PC-3 (cell line): ENCODE measurements at regions of chr12 and their contacts with region 1.

Region 1: DNA sequence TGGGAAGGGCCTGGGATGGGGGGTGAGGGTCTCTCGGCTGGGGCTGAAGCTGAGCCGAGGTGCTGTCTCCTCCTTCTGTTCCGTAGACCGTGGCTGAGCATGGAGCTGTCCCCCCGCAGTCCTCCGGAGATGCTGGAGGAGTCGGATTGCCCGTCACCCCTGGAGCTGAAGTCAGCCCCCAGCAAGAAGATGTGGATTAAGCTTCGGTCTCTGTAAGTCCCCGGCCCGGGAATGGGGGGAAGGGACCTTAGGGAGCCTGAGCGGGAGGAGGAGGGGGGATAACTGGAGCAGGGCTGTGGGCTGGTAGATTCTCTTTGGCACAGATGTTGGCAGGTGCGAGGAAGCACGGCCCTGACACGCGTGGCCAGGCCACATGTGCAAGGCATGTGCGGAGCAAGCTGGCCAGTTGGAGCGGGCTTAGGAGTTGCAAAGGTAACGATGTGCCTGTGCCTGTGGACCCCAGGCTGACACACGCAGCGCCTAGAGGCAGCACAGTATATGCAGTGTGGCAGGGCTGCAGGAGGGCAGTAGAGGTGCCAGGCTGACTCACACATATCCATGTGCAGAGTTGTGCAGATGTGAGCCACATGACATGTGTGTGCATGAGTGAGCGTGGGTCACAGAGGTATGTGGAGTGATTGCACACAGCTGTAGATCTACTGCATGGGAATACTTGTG is 512 bp downstream of the PDE1B start:
- DNase-seq: no peak
- ATAC-seq: peak; percentile 40
- H3K4me3 ChIP-seq: no peak overlapping the region
- H3K27ac ChIP-seq: no peak overlapping the region
- H3K4me1 ChIP-seq: no peaks in the 10 kb centered on the region
- H3K27me3 ChIP-seq: peaks cover 90% of the 10 kb centered on the region
- CTCF ChIP-seq: no peak

Region 2: DNA sequence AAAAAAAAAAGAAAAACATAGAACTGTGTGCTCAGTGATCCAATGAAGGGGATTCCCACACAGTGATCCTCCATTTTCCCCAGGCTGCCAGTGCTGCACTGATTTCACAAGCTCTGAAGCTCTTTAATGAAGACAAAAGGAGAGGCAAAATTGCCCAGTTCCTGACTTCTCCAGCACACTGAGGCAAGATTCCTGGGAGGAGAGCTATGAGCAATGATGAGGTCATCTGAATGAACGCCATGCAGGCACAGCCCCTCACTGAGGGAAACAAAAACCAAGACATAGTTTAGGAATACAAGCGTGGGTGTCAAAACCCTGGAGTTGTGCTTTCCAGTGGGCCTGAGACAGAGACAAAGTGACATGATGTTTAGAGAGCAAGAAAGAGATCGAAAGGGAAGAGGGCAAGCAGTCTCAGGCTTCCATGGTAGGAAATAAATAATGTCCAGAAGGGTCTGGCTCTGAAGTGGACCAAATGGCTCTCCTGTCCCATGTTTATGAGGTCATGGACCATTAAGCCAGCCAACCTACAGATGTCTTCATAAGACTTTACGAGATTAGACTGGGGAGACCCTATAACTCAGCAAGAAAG is 320.2 kb before region 1 on chr12:
- CTCF ChIA-PET with region 1: interaction called, 10 read pairs
- POLR2A ChIA-PET with region 1: no interaction called
- intact Hi-C with region 1: no loop called
- DNase-seq: peak; percentile 88
- ATAC-seq: peak; percentile 94
- H3K4me3 ChIP-seq: no peak overlapping the region
- H3K27ac ChIP-seq: peak overlapping the region; percentile 48
- H3K4me1 ChIP-seq: peaks cover 13% of the 10 kb centered on the region
- H3K27me3 ChIP-seq: no peaks in the 10 kb centered on the region
- CTCF ChIP-seq: no peak

Region 3: GRCh38 chr12:54680374-54680773 is 130.5 kb after region 1 on chr12:
- CTCF ChIA-PET with region 1: no interaction called
- POLR2A ChIA-PET with region 1: no interaction called
- intact Hi-C with region 1: no loop called
- DNase-seq: peak; percentile 54
- ATAC-seq: peak; percentile 71; the same call in 1 of the 2 replicates
- H3K4me3 ChIP-seq: no peak overlapping the region
- H3K27ac ChIP-seq: no peak overlapping the region
- H3K4me1 ChIP-seq: no peaks in the 10 kb centered on the region
- H3K27me3 ChIP-seq: peaks cover 79% of the 10 kb centered on the region
- CTCF ChIP-seq: peak; percentile 66

Region 4: GRCh38 chr12:54701940-54702592 is 152.2 kb after region 1 on chr12:
- CTCF ChIA-PET with region 1: no interaction called
- POLR2A ChIA-PET with region 1: no interaction called
- intact Hi-C with region 1: no loop called
- DNase-seq: peak; percentile 61
- ATAC-seq: peak; percentile 75
- H3K4me3 ChIP-seq: no peak overlapping the region
- H3K27ac ChIP-seq: no peak overlapping the region
- H3K4me1 ChIP-seq: no peaks in the 10 kb centered on the region
- H3K27me3 ChIP-seq: peaks cover 65% of the 10 kb centered on the region
- CTCF ChIP-seq: peak; percentile 70